ENCODE measurements at regions of chr5 and their contacts with region 1.

Region 1: DNA sequence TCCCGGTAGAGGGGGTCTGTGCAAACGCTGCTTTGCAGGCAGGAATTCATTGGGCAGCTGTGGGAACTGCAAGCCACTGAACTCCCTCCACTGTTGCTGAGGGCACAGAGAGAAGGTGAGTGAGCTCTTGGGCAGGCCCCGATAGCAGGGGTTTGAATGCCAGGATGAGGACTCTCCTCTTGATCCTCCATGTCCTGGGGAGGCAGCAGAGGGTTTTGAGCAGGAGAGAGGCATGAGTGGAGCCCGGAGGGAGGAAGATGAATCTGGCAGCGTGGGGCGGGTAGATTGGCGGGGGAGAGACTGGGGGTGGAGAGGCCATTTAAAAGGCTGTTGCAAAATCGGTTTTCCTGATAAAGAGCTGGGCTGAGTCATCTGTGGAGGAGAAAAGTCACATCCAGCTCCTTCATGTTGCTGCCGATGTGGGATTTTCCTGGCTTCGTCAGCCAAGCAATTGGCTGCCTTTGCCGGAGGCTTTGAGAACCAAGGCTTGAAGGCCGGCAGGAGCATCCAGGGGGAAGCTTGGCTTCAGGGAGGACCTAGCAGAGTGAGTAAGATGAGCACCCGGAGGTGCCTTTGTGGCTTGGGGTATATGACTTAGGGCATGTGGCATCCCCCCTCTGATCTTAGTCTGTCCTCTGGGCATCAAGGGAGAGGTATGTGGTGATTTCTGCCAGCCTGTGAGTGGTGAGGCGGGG is at the start of gene SYNPO:
- DNase-seq: peak; percentile 88
- H3K4me3 ChIP-seq: peak within 1 kb of the TSS; percentile 11 to 73 (median 60)
- H3K27ac ChIP-seq: peak within 1 kb of the TSS; percentile 98
- H3K4me1 ChIP-seq: peaks cover 82% of the 10 kb centered on the region
- H3K27me3 ChIP-seq: no peaks in the 10 kb centered on the region
- CTCF ChIP-seq: no peak
- POLR2A ChIP-seq: peak; percentile 91
- total RNA-seq, gene SYNPO: 93.9 and 121 TPM in 2 replicates

Region 2: GRCh38 chr5:150449517-150450339 is 190.7 kb before region 1 on chr5 and contains the start of gene RPS14:
- CTCF ChIA-PET with region 1: no interaction called
- POLR2A ChIA-PET with region 1: no interaction called
- dilution Hi-C with region 1: no loop called
- intact Hi-C with region 1: loop called (anchors 2 kb)
- DNase-seq: peak; percentile 97
- H3K4me3 ChIP-seq: peak within 1 kb of the TSS; percentile 86 to 93 (median 88)
- H3K27ac ChIP-seq: peak within 1 kb of the TSS; percentile 98
- H3K4me1 ChIP-seq: peaks cover 16% of the 10 kb centered on the region
- H3K27me3 ChIP-seq: no peaks in the 10 kb centered on the region
- CTCF ChIP-seq: peak; percentile 82 to 87
- POLR2A ChIP-seq: peak; percentile 90
- total RNA-seq, gene RPS14: 1,852 and 2,034 TPM in 2 replicates

Region 3: DNA sequence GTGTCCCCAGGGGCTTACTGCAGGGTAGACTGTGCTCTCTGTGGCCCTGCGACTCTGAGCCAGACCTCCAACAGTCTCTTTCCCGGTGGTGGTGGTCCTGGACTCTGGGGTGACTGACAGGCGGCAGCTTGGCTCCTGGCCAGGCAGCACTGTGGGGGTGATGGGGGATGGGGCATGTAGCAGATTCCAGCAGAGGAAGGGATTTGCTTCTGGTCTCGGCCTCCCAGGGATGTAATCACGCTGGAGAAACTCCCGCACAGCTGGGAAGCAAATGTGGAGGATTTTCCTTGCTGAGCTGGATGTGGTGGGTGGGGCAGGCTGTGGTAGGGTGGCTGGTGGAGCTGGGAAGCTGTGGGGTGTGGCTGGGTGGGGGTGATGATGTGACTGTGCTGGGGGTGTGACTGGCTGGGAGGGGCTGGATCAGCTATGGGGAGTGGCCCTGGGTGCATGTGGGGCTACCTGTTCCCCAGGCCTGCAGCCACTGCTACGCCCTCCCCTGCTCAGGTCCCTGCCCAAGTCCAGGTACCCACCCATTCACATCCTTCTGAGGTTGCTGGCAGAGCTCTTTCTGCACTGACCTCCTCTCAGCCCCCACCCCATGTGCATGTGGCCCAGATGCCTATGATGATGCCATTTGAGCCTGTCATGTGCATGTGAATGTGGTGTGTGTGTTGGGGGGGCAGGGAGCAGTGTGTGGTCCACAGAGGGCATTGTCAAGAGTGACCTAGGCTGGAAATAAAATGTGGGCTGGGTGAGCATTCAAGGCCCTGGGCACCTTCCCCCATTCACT is 128.7 kb before region 1 on chr5:
- CTCF ChIA-PET with region 1: no interaction called
- POLR2A ChIA-PET with region 1: no interaction called
- dilution Hi-C with region 1: no loop called
- intact Hi-C with region 1: loop called (anchors 1 kb)
- DNase-seq: no peak
- H3K4me3 ChIP-seq: no peak overlapping the region
- H3K27ac ChIP-seq: no peak overlapping the region
- H3K4me1 ChIP-seq: peaks cover 48% of the 10 kb centered on the region
- H3K27me3 ChIP-seq: no peaks in the 10 kb centered on the region
- CTCF ChIP-seq: no peak
- POLR2A ChIP-seq: no peak

Region 4: DNA sequence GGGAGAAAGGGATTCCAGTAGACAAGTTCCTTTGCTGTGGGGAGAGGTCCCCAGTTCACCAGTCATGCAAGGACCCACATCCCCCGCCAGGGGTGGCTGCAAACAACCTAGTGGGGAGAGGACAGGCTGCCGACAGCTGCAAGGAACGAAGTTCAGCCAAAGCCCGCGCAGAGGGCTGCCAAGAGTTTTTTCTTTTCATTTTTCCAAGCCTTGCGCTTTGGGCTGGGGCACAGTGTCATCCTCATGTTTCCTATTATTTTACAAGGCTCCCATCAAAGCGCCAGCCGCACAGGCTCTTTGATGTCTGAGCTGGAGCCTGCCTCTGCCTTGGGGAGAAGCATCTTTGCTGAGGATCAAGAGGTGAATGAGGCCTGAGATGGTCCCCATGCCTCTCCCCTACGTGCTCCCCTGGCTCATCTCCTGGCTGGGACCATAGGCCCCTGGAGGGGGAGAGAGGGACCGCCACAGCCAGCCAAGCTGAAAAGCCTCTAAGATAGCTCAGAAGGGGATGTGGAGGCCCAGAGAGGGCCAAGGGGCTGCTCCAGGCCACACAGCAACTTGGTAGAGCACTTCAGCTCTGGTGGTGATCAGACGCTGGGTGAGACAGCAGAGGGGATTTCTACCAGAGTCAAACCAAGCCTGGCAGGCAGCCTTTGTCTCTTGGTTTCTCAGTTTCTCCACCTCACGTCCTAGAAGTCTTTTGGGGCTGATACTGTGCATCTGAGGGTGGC is 50.4 kb before region 1 on chr5:
- CTCF ChIA-PET with region 1: interaction called, 46 read pairs
- POLR2A ChIA-PET with region 1: interaction called, 4 read pairs
- dilution Hi-C with region 1: no loop called
- intact Hi-C with region 1: loop called (anchors 1 kb)
- DNase-seq: peak; percentile 90
- H3K4me3 ChIP-seq: no peak overlapping the region
- H3K27ac ChIP-seq: no peak overlapping the region
- H3K4me1 ChIP-seq: peaks cover 14% of the 10 kb centered on the region
- H3K27me3 ChIP-seq: no peaks in the 10 kb centered on the region
- CTCF ChIP-seq: peak; percentile 52 to 87
- POLR2A ChIP-seq: no peak

Region 5: GRCh38 chr5:150599917-150600499 is 40.5 kb before region 1 on chr5:
- CTCF ChIA-PET with region 1: no interaction called
- POLR2A ChIA-PET with region 1: no interaction called
- dilution Hi-C with region 1: no loop called
- intact Hi-C with region 1: loop called (anchors 1 kb)
- DNase-seq: peak; percentile 93
- H3K4me3 ChIP-seq: peak overlapping the region in 1 of 3 experiments; percentile 14
- H3K27ac ChIP-seq: peak overlapping the region; percentile 34
- H3K4me1 ChIP-seq: peaks cover 34% of the 10 kb centered on the region
- H3K27me3 ChIP-seq: no peaks in the 10 kb centered on the region
- CTCF ChIP-seq: no peak
- POLR2A ChIP-seq: no peak

Region 6: GRCh38 chr5:150619359-150620230 is 20.9 kb before region 1 on chr5:
- CTCF ChIA-PET with region 1: interaction called, 6 read pairs
- POLR2A ChIA-PET with region 1: interaction called, 11 read pairs
- dilution Hi-C with region 1: no loop called
- intact Hi-C with region 1: loop called (anchors 1 kb)
- DNase-seq: peak; percentile 71
- H3K4me3 ChIP-seq: no peak overlapping the region
- H3K27ac ChIP-seq: peak overlapping the region; percentile 6
- H3K4me1 ChIP-seq: peaks cover 28% of the 10 kb centered on the region
- H3K27me3 ChIP-seq: no peaks in the 10 kb centered on the region
- CTCF ChIP-seq: no peak
- POLR2A ChIP-seq: peak; percentile 56

Region 7: GRCh38 chr5:150656191-150657132 is 16.0 kb after region 1 on chr5:
- CTCF ChIA-PET with region 1: interaction called, 40 read pairs
- POLR2A ChIA-PET with region 1: interaction called, 3 read pairs
- dilution Hi-C with region 1: no loop called
- intact Hi-C with region 1: loop called (anchors 1 kb)
- DNase-seq: peak; percentile 46
- H3K4me3 ChIP-seq: no peak overlapping the region
- H3K27ac ChIP-seq: no peak overlapping the region
- H3K4me1 ChIP-seq: no peaks in the 10 kb centered on the region
- H3K27me3 ChIP-seq: peaks cover under 1 to 7% of the 10 kb centered on the region in 2 experiments
- CTCF ChIP-seq: peak; percentile 34 to 70
- POLR2A ChIP-seq: peak; percentile 58

Region 8: DNA sequence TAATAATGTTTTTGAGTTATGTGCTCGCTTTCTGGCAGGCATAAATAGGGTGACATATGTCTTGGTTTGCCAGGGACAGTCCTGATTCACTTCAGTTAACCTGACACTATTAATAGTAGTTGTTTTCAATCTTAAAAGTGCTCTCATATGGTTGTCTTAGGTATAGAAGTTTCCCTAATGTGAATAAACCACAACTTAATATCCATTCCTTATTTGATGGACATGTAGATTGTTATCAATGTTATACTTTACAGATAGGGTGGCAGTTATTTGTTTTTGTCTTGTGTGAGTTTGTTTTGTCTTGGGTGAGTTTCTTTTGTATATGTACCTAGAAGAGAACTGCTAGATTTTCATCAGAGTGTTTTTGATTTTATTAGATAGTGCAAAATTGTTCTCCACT is 1139.2 kb after region 1 on chr5:
- CTCF ChIA-PET with region 1: no interaction called
- POLR2A ChIA-PET with region 1: no interaction called
- dilution Hi-C with region 1: no loop called
- intact Hi-C with region 1: no loop called
- DNase-seq: no peak
- H3K4me3 ChIP-seq: no peak overlapping the region
- H3K27ac ChIP-seq: no peak overlapping the region
- H3K4me1 ChIP-seq: peaks cover 21% of the 10 kb centered on the region
- H3K27me3 ChIP-seq: no peaks in the 10 kb centered on the region
- CTCF ChIP-seq: no peak
- POLR2A ChIP-seq: no peak

Measured in endothelial cell of umbilical vein (primary cell).